Sigmoid colon (tissue), 7 donors: ENCODE measurements at regions of chr2 and their contacts with region 1.

Region 1: DNA sequence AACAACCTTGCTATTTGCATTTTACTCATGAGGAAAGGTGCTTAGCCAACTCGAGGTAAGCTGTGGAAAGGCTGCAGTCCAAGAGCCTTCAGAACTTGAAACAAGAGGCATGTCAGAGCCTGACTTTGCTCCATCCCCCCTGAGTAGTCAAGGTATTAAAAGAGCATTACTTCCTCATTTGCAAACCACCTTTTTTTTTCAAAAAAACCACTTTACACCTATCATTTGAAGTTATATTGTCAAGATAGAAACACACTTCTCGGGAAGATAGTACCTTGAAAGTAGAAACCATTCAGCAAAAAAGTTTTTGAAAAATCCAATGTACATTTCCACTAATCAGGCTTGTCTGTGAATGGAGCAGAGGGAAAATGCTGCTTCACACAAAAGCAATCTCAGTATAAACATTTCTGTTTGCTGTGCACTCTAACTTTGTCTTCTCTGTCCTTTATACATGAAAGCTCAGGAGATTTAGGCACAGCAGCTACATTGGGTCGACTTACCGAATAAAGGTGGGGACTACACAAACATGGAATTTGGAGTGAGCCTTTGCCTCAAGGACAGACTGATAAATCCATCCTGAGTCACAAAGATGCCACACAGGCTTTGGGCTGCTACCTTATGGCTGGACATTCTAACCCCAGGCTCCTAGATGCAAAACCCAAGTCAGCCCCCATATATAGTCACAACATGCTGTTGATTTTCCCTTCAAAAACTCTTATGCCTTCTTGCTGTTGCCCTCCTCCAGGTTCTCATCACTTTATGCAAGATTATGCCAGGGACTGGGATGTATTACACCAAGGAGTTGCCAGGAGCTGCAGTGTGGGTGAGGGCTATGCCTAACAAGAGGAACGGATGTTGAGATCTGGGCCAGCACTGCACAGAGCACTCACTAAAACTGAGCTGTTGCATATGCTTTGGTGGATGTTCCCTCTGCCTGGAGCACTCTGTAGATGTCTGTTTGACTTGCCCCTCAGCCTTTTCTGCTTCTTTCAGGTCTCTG is 41.4 kb upstream of the EML4 start:
- DNase-seq: no peak
- H3K4me3 ChIP-seq: no peak overlapping the region
- H3K27ac ChIP-seq: peak overlapping the region in 1 of 4 donors; percentile 10
- H3K4me1 ChIP-seq: peaks cover 0 to 41% (median 36%) of the 10 kb centered on the region in 4 donors
- H3K27me3 ChIP-seq: no peaks in the 10 kb centered on the region
- CTCF ChIP-seq: no peak
- EP300 ChIP-seq: no peak
- POLR2A ChIP-seq: no peak

Region 2: GRCh38 chr2:42141687-42142546 is 14.2 kb after region 1 on chr2:
- intact Hi-C with region 1: loop called (anchors 2 kb)
- DNase-seq: peak; percentile 75
- H3K4me3 ChIP-seq: peak overlapping the region in 3 of 4 donors; percentile 14 to 22 (median 15)
- H3K27ac ChIP-seq: peak overlapping the region; percentile 61 to 71 (median 68)
- H3K4me1 ChIP-seq: peaks cover 0 to 53% (median 46%) of the 10 kb centered on the region in 4 donors
- H3K27me3 ChIP-seq: no peaks in the 10 kb centered on the region
- CTCF ChIP-seq: no peak
- EP300 ChIP-seq: no peak
- POLR2A ChIP-seq: no peak

Region 3: DNA sequence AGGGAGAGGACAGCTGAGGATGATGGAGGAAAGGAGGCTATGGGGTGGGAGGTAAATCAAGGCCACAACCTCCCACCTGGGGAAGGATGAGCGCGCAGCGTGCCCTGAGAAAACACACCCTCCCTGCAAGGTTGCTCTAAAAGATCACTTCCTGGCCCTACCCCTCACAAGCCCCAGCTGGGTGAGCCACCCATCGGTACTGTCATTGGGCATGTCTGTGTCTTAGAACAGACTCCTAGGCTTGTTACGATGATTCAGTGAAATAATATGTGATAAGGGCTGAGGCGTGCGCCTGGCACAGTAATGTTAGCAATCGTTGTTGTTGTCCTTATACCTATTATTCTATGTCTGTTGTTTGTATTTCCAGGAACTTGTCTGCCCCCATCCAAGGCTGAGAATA is 923.6 kb after region 1 on chr2:
- intact Hi-C with region 1: no loop called
- DNase-seq: peak; percentile 37
- H3K4me3 ChIP-seq: no peak overlapping the region
- H3K27ac ChIP-seq: no peak overlapping the region
- H3K4me1 ChIP-seq: peaks cover 0 to 4% (median 4%) of the 10 kb centered on the region in 4 donors
- H3K27me3 ChIP-seq: no peaks in the 10 kb centered on the region
- CTCF ChIP-seq: no peak
- EP300 ChIP-seq: no peak
- POLR2A ChIP-seq: no peak

Region 4: DNA sequence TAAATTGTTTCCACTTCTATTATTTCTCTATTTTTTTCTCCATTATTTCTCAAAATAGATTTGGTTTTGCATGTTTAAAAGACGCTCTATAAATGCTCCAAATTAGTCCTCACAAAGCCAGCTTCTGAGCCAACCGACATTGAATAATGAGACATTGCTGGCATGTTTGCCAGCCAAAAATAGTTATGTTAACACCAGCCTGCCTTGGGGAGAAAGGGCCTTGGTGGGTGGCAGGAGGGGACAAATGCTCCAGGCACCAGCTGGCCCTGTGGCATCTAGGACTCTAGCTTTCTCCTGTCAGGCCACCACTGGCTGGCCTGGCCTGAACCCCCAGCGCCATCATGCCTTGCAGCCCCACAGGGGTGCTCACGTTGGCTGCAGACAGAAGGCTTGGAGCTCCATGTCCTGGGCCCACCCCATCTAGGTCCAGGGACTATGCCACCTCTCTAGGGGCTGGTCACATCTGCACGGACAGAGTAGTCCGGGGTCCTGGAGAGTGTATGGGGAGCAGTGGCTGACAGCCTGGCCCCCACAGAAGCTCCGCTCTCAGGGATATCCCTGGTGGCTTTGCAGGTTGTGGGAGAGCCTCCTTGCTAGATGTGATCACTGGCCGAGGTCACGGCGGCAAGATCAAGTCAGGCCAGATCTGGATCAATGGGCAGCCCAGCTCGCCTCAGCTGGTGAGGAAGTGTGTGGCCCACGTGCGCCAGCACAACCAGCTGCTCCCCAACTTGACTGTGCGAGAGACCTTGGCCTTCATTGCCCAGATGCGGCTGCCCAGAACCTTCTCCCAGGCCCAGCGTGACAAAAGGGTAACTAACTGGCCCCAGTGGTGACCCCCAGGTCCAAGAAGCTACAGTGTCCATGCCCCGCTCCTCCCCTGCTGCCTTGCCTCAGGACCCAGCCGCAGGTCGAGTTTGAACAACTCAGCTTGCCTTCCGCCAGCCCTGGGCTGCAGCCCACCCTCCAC is 1723.6 kb after region 1 on chr2:
- intact Hi-C with region 1: no loop called
- DNase-seq: no peak
- H3K4me3 ChIP-seq: no peak overlapping the region
- H3K27ac ChIP-seq: no peak overlapping the region
- H3K4me1 ChIP-seq: no peaks in the 10 kb centered on the region
- H3K27me3 ChIP-seq: peaks cover 5 to 42% (median 25%) of the 10 kb centered on the region in 3 donors
- CTCF ChIP-seq: no peak
- EP300 ChIP-seq: no peak
- POLR2A ChIP-seq: no peak